ENCODE measurements at regions of chr21 and their contacts with region 1.

Region 1: DNA sequence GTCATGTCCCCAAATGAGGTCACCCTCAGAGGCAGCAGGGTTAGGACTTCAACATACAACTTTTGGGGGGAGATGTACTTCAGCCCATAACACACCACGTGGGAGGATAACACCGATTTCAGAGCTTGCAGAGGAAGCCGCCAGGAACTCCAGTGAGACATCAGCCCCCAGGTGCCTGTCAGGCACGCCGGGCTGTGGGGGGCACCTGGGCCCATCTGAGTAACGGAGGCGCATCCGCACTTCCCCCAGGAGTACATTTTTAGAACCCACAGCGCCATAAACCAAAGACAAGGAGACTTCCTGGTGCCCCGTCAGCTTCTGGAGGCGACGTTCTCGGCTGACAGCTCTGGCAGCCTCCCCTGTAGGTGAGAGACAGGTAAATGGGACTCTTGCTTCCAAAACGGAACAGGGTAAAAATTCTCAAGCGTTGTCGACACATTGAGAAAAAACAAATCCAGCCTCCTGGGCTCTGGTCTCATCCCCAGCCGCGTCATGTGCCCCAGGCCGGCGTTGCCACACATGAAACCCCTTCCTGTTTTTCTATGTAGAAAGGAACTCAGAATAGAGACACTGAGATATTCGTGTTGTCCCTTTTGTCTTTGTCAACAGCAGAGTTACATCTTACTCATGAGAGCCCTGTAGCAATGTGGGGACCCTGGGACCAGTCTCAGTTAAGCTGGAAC is 93.3 kb downstream of the PDE9A start:
- DNase-seq: peak in 1 of 2 donors; percentile 43
- ATAC-seq: no peak

Region 2: DNA sequence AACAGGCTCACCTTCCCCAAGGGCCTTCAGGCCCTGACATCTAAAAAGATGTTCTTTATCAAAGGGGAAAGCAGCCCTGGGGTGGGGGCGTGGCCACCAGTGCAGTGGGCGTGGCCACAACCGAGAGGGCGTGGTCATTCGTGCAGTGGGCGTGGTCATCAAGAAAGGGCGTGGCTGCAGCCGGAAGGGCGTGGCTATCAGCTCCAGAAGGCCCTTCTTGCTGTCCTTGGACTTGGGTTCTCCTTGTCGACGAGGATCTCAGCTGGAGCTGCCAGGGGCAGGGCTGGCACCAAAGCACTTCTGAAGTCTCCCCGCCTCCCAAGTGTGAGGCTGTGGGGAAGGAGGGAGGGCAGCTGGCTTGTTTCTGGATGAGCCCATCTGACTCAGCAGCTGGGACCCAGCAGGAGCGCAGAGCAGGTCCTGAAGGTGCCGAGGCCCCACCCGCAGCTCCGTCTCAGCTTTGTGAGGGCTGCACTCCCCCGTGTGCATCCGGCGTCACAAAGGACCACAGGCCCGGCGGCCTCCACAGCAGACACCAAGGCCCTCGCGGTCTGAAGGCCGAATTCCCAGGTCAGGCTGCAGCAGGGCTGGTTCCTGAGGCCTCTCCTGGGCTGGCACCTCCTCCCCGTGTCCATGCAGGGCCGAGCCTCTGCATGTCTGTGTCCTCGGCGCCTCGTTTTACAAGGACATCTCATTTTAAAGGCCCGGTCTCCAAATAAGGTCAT is 80.5 kb before region 1 on chr21:
- intact Hi-C with region 1: loop called in 1 of 2 experiments (anchors 10 kb)
- DNase-seq: peak; percentile 40 to 55
- ATAC-seq: peak; percentile 75

Region 3: GRCh38 chr21:42806509-42807140 is 59.9 kb after region 1 on chr21:
- intact Hi-C with region 1: no loop called
- DNase-seq: no peak
- ATAC-seq: no peak

Region 4: DNA sequence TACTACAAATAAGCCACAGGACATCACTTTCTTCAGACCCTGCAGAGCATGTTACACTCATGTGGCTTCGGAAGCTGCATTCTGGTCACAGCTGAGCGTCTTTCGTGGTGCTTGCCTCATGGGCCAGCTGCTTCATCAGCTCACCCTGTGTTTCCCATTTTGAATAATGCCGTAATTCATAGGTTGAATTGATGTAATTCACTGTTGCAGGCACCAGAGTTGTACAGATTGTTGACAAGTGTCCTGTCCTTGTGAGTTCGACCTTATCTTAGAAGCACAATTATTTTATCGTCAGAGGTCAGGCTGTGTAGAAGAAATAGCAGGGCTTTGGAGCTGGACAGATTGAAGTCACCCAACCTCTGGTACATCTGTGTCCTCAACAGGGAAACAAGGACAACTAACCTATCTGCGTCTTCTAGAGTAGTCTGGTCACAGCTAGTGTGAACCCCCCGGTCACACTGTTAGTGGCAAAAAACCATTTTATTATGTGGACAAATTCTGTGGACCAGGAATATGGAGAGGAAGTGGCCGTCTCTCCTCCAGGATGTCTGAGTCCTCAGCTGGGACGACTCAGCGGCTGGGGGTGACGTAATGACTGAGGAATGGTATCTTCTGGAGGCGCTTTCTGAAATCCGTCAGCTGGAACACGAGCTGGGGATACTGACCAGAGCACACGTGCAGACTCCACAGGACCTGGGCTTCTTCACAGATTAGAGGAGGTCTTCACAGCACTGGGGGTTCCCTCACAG is 245.4 kb after region 1 on chr21:
- intact Hi-C with region 1: no loop called
- DNase-seq: peak; percentile 38 to 66
- ATAC-seq: no peak

Region 5: DNA sequence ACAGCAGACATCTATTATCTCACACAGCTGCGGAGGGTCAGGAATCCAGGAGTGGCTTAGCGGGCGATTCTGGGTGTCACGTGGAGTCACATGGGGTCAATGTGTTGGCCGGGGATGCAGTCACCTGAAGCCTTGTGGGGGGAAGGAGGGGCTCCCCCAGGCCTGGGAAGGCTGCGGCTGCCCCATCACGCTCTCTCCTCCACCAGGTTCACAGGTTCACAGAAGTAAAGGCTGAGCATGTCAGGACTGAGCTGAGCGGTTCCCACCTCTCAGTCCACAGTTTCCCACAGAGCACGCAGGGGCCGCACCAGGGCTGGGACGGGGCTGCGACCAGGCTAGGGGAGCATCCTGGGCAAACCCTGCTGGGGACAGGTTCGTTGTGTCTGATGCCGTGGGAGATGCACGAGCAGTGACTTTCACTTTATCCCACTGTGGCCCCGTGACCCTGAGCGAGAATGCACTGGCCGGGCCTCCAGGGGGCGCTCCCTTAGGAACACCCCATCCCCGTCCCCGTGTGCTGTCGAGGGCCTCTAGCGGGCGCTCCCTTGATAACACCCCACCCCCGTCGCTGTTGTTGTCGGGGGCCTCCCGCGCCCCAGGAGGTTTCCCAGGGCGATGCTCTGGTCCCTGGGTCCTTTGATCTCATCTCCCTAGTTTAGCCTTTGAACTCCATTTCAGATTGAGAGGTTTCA is 1192.2 kb after region 1 on chr21:
- intact Hi-C with region 1: no loop called
- DNase-seq: peak; percentile 75 to 90
- ATAC-seq: peak; percentile 90

Measured in left colon (tissue), 2 donors.